HepG2 (cell line): ENCODE measurements at regions of chr7 and their contacts with region 1.

Region 1: DNA sequence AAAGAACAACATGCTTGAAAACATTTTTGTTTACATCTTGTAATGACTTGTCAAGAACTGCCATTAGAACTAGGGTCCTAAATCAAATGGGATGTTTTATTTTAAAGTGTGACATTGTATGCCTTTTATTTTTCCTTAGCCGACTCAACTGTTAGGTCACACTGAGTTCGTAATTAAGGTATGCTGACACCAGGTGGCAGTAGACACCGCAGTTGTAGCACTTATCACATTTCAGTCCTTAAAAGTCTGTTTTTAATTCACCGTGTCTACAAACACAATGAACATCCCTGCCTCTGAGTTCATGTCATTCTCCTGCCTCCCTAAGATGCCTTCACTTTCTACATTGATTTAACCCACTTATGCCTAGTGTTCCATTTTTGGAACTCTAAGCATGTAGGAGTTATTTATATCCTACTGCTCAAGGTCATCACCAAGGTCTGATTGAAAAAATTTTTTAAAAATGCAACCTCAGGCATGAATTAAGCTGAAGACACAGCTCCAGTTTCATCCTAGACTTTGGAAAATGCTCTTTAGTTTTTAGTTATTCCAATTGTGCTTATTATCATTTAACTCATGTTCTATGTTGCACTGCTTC is 186.1 kb downstream of the BMPER start:
- DNase-seq: peak; percentile 38
- ATAC-seq: no peak; the same call in 2 of the 3 replicates
- H3K4me3 ChIP-seq: no peak overlapping the region
- H3K27ac ChIP-seq: no peak overlapping the region
- H3K4me1 ChIP-seq: no peaks in the 10 kb centered on the region
- H3K27me3 ChIP-seq: no peaks in the 10 kb centered on the region
- CTCF ChIP-seq: peak; percentile 60
- EP300 ChIP-seq: no peak
- POLR2A ChIP-seq: no peak
- RAD21 ChIP-seq: no peak

Region 2: DNA sequence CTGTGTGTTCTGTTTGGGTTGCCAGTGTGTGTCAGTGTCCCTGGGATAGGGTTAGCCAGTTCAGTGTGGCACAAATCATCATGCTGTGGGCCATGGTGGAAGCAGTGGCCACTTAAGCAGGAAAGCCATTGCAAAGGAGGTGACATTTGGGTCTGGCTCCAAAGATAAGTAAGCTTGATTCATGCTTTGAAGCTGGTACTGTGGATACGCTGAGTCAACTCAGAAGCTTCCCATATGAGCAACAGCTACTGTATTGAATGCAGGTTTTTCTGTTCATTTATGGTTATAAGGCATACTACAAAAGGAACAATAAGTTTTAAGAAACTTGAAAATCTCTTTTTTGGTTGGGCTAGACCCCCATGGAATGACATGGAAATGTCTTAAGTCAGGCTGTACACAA is 43.0 kb before region 1 on chr7:
- CTCF ChIA-PET with region 1: no interaction called
- POLR2A ChIA-PET with region 1: no interaction called
- in situ Hi-C with region 1: no loop called
- intact Hi-C with region 1: no loop called
- DNase-seq: no peak
- ATAC-seq: no peak
- H3K4me3 ChIP-seq: no peak overlapping the region
- H3K27ac ChIP-seq: no peak overlapping the region
- H3K4me1 ChIP-seq: no peaks in the 10 kb centered on the region
- H3K27me3 ChIP-seq: no peaks in the 10 kb centered on the region; a peak in 1 of 5 replicates
- CTCF ChIP-seq: no peak
- EP300 ChIP-seq: no peak
- POLR2A ChIP-seq: no peak
- RAD21 ChIP-seq: no peak

Region 3: DNA sequence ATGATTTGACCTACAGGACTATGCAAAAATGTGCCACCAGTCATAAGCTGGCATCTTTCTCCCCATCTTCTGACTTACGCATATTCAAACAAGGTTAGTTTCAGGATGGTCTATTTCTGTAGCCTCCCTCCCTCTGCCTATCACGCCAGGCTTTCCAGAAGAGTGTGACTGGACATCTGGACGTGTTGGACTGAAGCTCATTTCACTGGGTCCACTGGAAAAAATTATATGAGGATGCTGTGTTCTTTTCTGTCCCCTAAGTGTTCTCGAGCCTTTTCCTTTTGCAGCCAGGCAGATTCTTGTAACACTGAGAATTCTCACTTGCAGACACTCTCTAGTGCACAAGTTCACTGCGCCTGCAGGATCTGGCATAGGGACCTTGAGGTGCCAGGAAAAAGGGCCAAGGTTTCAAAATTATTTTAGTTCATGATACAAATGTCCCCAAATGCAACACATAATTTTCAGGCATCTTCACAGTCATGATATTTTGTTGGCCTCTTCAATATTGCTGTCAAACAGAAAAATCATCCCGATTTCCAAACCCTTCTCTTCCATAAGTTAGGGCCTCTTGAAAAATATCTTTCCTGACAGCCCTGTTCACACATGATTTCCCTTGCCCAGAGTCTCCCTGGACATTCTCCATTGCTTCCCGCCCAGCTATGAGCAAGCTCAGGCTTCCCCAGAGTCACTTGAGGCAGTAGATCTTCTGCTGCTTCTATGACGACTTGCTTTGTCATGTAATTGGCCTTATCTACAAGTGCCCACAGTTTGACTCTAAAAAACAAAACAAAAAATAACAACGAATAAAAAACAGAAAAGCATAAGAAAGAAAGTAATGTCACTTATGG is 15.7 kb before region 1 on chr7:
- CTCF ChIA-PET with region 1: no interaction called
- POLR2A ChIA-PET with region 1: no interaction called
- in situ Hi-C with region 1: no loop called
- intact Hi-C with region 1: no loop called
- DNase-seq: no peak
- ATAC-seq: no peak
- H3K4me3 ChIP-seq: no peak overlapping the region
- H3K27ac ChIP-seq: no peak overlapping the region
- H3K4me1 ChIP-seq: no peaks in the 10 kb centered on the region
- H3K27me3 ChIP-seq: no peaks in the 10 kb centered on the region
- CTCF ChIP-seq: no peak
- EP300 ChIP-seq: no peak
- POLR2A ChIP-seq: no peak
- RAD21 ChIP-seq: no peak

Region 4: GRCh38 chr7:34165929-34166550 is 74.6 kb after region 1 on chr7:
- CTCF ChIA-PET with region 1: no interaction called
- POLR2A ChIA-PET with region 1: no interaction called
- in situ Hi-C with region 1: no loop called
- intact Hi-C with region 1: loop called (anchors 1 kb)
- DNase-seq: peak; percentile 25
- ATAC-seq: peak; percentile 79
- H3K4me3 ChIP-seq: no peak overlapping the region
- H3K27ac ChIP-seq: no peak overlapping the region
- H3K4me1 ChIP-seq: no peaks in the 10 kb centered on the region
- H3K27me3 ChIP-seq: no peaks in the 10 kb centered on the region
- CTCF ChIP-seq: peak; percentile 59
- EP300 ChIP-seq: no peak
- POLR2A ChIP-seq: no peak
- RAD21 ChIP-seq: no peak